ENCODE measurements at regions of chr17 and their contacts with region 1.

Region 1: GRCh38 chr17:44794851-44795413 is 35.2 kb downstream of the GJC1 start:
- DNase-seq: peak; percentile 99
- ATAC-seq: peak; percentile 84
- H3K4me3 ChIP-seq: no peak overlapping the region
- H3K27ac ChIP-seq: peak overlapping the region; percentile 78
- H3K4me1 ChIP-seq: peaks cover 26% of the 10 kb centered on the region
- H3K27me3 ChIP-seq: no peaks in the 10 kb centered on the region
- CTCF ChIP-seq: no peak
- POLR2A ChIP-seq: no peak
- RAD21 ChIP-seq: no peak

Region 2: GRCh38 chr17:44533533-44534246 is 261.2 kb before region 1 on chr17:
- CTCF ChIA-PET with region 1: no interaction called
- POLR2A ChIA-PET with region 1: no interaction called
- dilution Hi-C with region 1: no loop called
- in situ Hi-C with region 1: no loop called
- intact Hi-C with region 1: no loop called
- DNase-seq: peak; percentile 90
- ATAC-seq: peak; percentile 83
- H3K4me3 ChIP-seq: peak overlapping the region; percentile 2; the same call in 1 of the 2 replicates
- H3K27ac ChIP-seq: peak overlapping the region; percentile 61
- H3K4me1 ChIP-seq: peaks cover 12% of the 10 kb centered on the region
- H3K27me3 ChIP-seq: no peaks in the 10 kb centered on the region
- CTCF ChIP-seq: peak; percentile 98
- POLR2A ChIP-seq: peak; percentile 60; the same call in 1 of the 2 replicates
- RAD21 ChIP-seq: peak; percentile 99

Region 3: GRCh38 chr17:44820631-44821212 is 25.8 kb after region 1 on chr17:
- CTCF ChIA-PET with region 1: no interaction called
- POLR2A ChIA-PET with region 1: no interaction called
- dilution Hi-C with region 1: no loop called
- in situ Hi-C with region 1: loop called (anchors 5 kb)
- intact Hi-C with region 1: loop called (anchors 2 kb)
- DNase-seq: peak; percentile 91
- ATAC-seq: peak; percentile 91
- H3K4me3 ChIP-seq: no peak overlapping the region
- H3K27ac ChIP-seq: no peak overlapping the region
- H3K4me1 ChIP-seq: peaks cover 11% of the 10 kb centered on the region; the same call in 1 of the 2 replicates
- H3K27me3 ChIP-seq: no peaks in the 10 kb centered on the region
- CTCF ChIP-seq: no peak
- POLR2A ChIP-seq: no peak
- RAD21 ChIP-seq: no peak

Region 4: GRCh38 chr17:44829523-44830358 is 34.8 kb after region 1 on chr17 and contains the start of gene GJC1:
- CTCF ChIA-PET with region 1: interaction called, 3 read pairs
- POLR2A ChIA-PET with region 1: interaction called, 3 read pairs
- dilution Hi-C with region 1: no loop called
- in situ Hi-C with region 1: loop called (anchors 5 kb)
- intact Hi-C with region 1: no loop called
- DNase-seq: no peak
- ATAC-seq: peak; percentile 77
- H3K4me3 ChIP-seq: peak within 1 kb of the TSS; percentile 77
- H3K27ac ChIP-seq: peak within 1 kb of the TSS; percentile 86
- H3K4me1 ChIP-seq: peaks cover 2% of the 10 kb centered on the region
- H3K27me3 ChIP-seq: no peaks in the 10 kb centered on the region
- CTCF ChIP-seq: no peak
- POLR2A ChIP-seq: no peak; the same call in 1 of the 2 replicates
- RAD21 ChIP-seq: no peak
- total RNA-seq, gene GJC1: 53.3 and 69.7 TPM in 2 replicates

Region 5: DNA sequence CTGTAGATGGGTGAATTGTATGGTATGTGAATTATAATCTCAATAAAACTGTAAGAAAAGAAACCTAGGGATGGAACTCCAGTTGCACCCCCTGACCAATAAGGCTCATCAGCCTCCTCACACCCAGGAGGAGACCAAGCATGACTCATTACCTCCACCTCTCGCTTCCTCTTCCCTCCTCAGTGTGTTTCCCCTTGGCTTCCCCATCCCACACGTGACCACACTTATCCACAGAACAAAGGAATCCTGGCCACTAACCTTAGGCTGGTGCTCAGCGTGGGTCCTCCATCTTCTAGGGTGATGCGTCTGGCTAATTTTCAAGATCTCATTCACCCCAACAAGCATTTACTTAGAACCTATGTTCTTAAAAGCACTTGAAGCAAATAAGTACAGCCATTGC is 558.1 kb after region 1 on chr17:
- CTCF ChIA-PET with region 1: no interaction called
- POLR2A ChIA-PET with region 1: no interaction called
- dilution Hi-C with region 1: no loop called
- in situ Hi-C with region 1: no loop called
- intact Hi-C with region 1: no loop called
- DNase-seq: no peak
- ATAC-seq: no peak
- H3K4me3 ChIP-seq: no peak overlapping the region
- H3K27ac ChIP-seq: no peak overlapping the region
- H3K4me1 ChIP-seq: no peaks in the 10 kb centered on the region
- H3K27me3 ChIP-seq: peaks cover 3% of the 10 kb centered on the region; the same call in 1 of the 2 replicates
- CTCF ChIP-seq: no peak
- POLR2A ChIP-seq: no peak
- RAD21 ChIP-seq: no peak

Measured in IMR-90 (cell line).